ENCODE measurements at regions of chr10 and their contacts with region 1.

Region 1: GRCh38 chr10:29409241-29410057 is 120.6 kb downstream of the LYZL1 start:
- DNase-seq: peak; percentile 55
- ATAC-seq: peak; percentile 87
- H3K4me3 Mint-ChIP-seq: peak overlapping the region; percentile 90
- H3K27ac Mint-ChIP-seq: peak overlapping the region; percentile 87
- H3K4me1 Mint-ChIP-seq: peaks cover 27% of the 10 kb centered on the region
- H3K27me3 Mint-ChIP-seq: no peaks in the 10 kb centered on the region

Region 2: GRCh38 chr10:29257106-29257783 is 152.2 kb before region 1 on chr10:
- CTCF ChIA-PET with region 1: no interaction called
- POLR2A ChIA-PET with region 1: no interaction called
- DNase-seq: no peak
- ATAC-seq: no peak
- H3K4me3 Mint-ChIP-seq: no peak overlapping the region
- H3K27ac Mint-ChIP-seq: no peak overlapping the region
- H3K4me1 Mint-ChIP-seq: no peaks in the 10 kb centered on the region
- H3K27me3 Mint-ChIP-seq: peaks cover 8% of the 10 kb centered on the region

Region 3: DNA sequence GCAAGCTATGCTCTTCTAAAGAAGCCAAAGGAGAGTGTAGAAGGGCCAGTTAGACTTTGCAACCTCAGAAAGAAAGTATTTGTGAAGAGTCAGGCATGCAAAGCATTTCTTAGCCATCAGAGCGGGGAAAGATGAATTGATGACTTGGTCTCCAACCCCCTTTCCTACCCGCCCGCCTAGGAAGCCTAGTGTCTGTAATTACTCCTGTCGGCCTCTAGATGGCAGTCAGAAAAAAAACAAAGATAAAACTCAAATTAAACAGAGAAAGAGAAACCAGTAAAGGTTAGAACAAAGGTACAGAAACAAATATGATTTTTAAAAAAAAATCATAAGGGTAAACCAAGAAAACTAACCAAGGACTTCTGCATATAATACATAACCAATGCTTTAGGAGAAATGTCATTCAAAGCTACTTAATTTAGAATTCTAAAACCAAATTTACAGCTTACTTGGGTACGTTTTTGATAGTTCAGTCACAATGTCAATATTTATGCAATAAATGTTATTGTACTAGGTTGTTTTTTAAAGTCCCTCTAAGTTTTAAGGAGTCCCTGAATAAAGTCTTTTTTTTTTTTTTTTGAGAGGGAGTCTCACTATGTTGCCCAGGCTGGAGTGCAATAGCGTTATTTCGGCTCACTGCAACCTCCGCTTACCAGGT is 23.0 kb before region 1 on chr10:
- CTCF ChIA-PET with region 1: interaction called, 14 read pairs
- POLR2A ChIA-PET with region 1: no interaction called
- DNase-seq: peak; percentile 38
- ATAC-seq: peak; percentile 64
- H3K4me3 Mint-ChIP-seq: no peak overlapping the region
- H3K27ac Mint-ChIP-seq: no peak overlapping the region
- H3K4me1 Mint-ChIP-seq: peaks cover 19% of the 10 kb centered on the region
- H3K27me3 Mint-ChIP-seq: peaks cover 5% of the 10 kb centered on the region

Region 4: GRCh38 chr10:29392376-29393021 is 16.9 kb before region 1 on chr10:
- CTCF ChIA-PET with region 1: interaction called, 18 read pairs
- POLR2A ChIA-PET with region 1: no interaction called
- DNase-seq: peak; percentile 62
- ATAC-seq: peak; percentile 64
- H3K4me3 Mint-ChIP-seq: no peak overlapping the region
- H3K27ac Mint-ChIP-seq: no peak overlapping the region
- H3K4me1 Mint-ChIP-seq: no peaks in the 10 kb centered on the region
- H3K27me3 Mint-ChIP-seq: peaks cover 1% of the 10 kb centered on the region

Region 5: GRCh38 chr10:29635711-29636144 is 226.3 kb after region 1 on chr10:
- CTCF ChIA-PET with region 1: no interaction called
- POLR2A ChIA-PET with region 1: no interaction called
- DNase-seq: peak; percentile 26
- ATAC-seq: peak; percentile 80
- H3K4me3 Mint-ChIP-seq: no peak overlapping the region
- H3K27ac Mint-ChIP-seq: peak overlapping the region; percentile 6
- H3K4me1 Mint-ChIP-seq: peaks cover 30% of the 10 kb centered on the region
- H3K27me3 Mint-ChIP-seq: peaks cover 2% of the 10 kb centered on the region